ENCODE measurements at regions of chr22 and their contacts with region 1.

Region 1: DNA sequence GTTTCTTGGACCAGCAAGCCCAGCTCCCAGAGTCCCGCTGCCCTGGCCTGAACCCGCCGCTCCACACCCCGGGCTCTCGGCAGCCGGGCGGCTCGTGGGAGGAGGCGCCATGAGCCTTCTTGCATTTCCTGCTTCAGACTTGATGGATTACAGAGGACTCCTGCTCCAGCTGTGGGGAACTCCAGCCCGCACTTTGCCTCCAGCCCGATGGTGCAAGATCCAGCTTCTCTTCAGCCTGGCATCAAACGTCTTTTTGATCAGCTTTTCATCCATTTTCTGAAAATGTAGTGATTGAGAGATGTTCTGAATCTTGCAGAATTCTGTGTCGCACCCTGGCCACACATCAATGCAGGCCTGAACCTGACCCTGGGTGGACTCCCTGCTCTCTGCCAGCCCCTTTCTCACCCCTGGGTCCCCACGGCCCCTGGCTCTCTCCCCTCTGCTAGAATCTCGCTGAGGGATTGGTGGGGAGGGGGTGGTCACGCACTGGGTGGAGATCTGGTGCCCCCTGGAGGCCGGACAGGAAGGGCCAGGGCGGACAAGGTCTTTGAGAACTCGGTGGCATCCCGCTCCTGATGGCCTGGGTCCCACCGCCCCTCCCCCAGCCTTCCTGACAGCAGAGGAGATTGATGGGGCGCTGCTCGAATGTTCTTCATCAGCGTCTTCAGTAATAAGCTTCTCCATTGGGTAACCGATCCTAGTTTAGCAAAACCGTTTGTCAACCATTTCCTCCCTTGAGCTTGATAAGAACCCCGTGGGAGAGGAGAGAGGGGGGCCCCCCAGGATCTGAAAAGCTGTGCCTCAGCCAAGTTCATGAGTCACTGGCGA is 12.1 kb upstream of the NFAM1 start:
- DNase-seq: peak; percentile 83 to 90 (median 85)
- H3K4me3 ChIP-seq: peak overlapping the region; percentile 33 to 71
- H3K4me3 Mint-ChIP-seq: peak overlapping the region; percentile 76 to 87 (median 84)
- H3K27ac ChIP-seq: peak overlapping the region; percentile 69
- H3K27ac Mint-ChIP-seq: peak overlapping the region; percentile 93 to 96 (median 94)
- H3K4me1 ChIP-seq: peaks cover 20% of the 10 kb centered on the region
- H3K4me1 Mint-ChIP-seq: peaks cover 14 to 34% (median 21%) of the 10 kb centered on the region in 4 donors
- H3K27me3 ChIP-seq: no peaks in the 10 kb centered on the region
- H3K27me3 Mint-ChIP-seq: no peaks in the 10 kb centered on the region

Region 2: DNA sequence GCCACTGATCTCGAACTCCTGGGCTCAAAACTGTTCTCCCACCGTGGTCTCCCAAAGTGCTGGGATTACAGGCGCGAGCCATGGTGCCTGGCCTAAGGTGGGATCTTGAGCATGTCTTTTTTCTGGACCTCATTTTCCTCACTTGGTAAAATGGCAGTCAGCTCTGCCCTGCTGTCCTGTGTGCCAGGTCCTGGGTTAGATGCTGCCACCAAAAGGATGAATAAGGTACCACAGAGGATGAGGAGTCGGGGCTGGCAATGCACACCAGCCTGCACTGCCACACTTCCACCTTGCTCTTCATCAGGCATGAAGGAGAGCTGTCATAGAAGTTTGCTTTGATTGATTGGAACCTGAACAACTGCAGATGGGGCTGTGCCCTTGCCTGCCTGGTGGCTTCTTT is 943.1 kb before region 1 on chr22:
- CTCF ChIA-PET with region 1: no interaction called
- POLR2A ChIA-PET with region 1: no interaction called
- intact Hi-C with region 1: no loop called
- DNase-seq: peak in 1 of 5 donors; percentile 10
- H3K4me3 ChIP-seq: no peak overlapping the region
- H3K4me3 Mint-ChIP-seq: no peak overlapping the region
- H3K27ac ChIP-seq: no peak overlapping the region
- H3K27ac Mint-ChIP-seq: peak overlapping the region in 1 of 7 donors; percentile 37
- H3K4me1 ChIP-seq: no peaks in the 10 kb centered on the region
- H3K4me1 Mint-ChIP-seq: peaks cover 0 to 7% (median 0%) of the 10 kb centered on the region in 4 donors
- H3K27me3 ChIP-seq: no peaks in the 10 kb centered on the region
- H3K27me3 Mint-ChIP-seq: no peaks in the 10 kb centered on the region

Region 3: DNA sequence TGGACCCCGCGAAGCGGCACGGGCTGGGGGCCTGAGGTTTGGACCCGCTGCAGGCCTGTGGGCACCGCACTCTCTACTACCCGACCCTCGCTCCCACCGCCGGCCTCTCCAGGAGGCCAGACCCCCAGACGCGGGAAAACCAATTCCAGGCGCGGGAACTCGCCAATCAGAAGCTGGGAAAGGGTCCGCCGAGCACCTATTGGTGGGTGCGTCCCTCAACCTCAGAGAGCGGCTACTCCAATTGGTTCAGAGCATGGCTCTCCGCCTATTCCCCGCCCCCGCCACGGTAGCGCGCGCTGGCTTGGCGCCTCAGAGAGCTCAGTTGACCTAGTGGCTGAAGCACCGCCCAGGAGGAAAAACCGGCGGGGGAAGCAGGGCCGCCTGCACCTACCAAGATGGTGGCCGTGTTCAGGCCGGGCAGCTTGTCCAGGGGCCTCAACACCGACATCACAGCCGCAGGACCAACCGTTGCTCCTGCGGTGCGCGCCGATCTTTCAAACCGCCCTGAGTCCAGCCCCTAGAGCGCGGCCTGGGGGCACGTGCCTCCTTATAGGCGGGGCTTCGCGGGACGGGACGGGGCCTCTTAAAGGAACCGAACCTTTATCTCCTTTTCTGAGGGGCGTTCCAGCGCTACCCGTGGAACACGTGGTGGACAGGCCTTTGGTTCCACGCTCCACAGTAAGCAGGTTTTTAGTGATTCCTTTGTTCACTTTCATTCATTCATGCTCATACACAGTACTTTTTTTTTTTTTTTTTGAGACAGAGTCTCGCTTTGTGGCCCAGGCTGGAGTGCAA is 497.5 kb before region 1 on chr22 and contains the start of gene CENPM:
- CTCF ChIA-PET with region 1: interaction called, 3 read pairs
- POLR2A ChIA-PET with region 1: interaction called, 10 read pairs
- intact Hi-C with region 1: no loop called
- DNase-seq: peak; percentile 84 to 88 (median 86)
- H3K4me3 ChIP-seq: peak within 1 kb of the TSS; percentile 84 to 87
- H3K4me3 Mint-ChIP-seq: peak within 1 kb of the TSS; percentile 89 to 97 (median 92)
- H3K27ac ChIP-seq: peak within 1 kb of the TSS; percentile 53
- H3K27ac Mint-ChIP-seq: peak within 1 kb of the TSS; percentile 82 to 94 (median 89)
- H3K4me1 ChIP-seq: peaks cover 14% of the 10 kb centered on the region
- H3K4me1 Mint-ChIP-seq: peaks cover 4 to 29% (median 12%) of the 10 kb centered on the region in 4 donors
- H3K27me3 ChIP-seq: no peaks in the 10 kb centered on the region
- H3K27me3 Mint-ChIP-seq: no peaks in the 10 kb centered on the region
- total RNA-seq, gene CENPM: 7.6 to 12.0 TPM

Region 4: DNA sequence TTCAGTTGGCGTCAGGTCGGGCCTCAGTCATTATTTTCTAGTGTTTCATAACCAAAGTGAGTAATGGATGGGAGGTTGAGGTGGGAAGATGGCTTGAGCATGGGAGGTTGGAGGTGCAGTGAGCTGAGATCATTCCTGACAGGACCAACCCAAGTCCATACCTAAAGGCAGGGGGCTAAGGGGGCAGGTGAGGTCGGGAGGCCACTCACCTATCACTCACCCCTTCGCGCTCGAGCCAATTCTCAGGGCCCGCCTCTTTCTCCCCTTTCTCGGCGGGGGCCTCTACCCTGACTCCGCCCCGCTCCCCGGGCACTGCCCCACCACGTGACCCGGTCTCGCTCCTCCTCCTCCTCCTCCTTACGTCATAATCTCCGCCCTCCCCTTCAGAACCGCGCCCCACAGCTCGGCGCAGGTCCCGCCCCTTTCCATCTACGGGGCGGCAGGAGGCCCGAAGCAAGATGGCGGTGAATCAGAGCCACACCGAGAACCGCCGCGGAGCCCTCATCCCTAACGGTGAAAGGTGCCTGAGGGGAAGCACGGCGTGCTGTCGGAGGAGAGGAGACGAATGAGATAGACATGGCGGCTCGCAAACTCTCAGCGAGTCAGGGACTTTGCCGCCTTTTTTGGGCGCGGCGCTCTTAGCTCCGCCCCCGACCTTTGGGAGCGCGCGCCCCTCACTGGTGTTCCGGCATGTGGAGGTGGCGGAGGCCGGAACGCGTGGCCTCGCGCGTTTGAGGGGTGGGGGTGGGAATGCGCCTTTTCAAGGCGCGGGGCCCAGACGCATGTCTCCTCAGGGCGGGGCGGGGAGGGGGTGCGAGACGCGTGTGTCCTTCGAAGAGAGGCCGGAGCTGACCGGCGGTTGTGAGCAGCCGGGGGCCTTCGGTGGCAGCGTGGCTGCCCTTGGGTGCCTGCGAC is 445.7 kb before region 1 on chr22 and contains the start of gene WBP2NL:
- CTCF ChIA-PET with region 1: interaction called, 3 read pairs
- POLR2A ChIA-PET with region 1: interaction called, 11 read pairs
- intact Hi-C with region 1: no loop called
- DNase-seq: peak; percentile 90 to 92 (median 92)
- H3K4me3 ChIP-seq: peak within 1 kb of the TSS; percentile 6 to 74
- H3K4me3 Mint-ChIP-seq: peak within 1 kb of the TSS; percentile 93 to 99 (median 98)
- H3K27ac ChIP-seq: peak within 1 kb of the TSS; percentile 61
- H3K27ac Mint-ChIP-seq: peak within 1 kb of the TSS; percentile 67 to 100 (median 98)
- H3K4me1 ChIP-seq: peaks cover 21% of the 10 kb centered on the region
- H3K4me1 Mint-ChIP-seq: peaks cover 13 to 35% (median 19%) of the 10 kb centered on the region in 4 donors
- H3K27me3 ChIP-seq: no peaks in the 10 kb centered on the region
- H3K27me3 Mint-ChIP-seq: no peaks in the 10 kb centered on the region
- total RNA-seq, gene WBP2NL: 3.5 to 5.4 TPM

Region 5: DNA sequence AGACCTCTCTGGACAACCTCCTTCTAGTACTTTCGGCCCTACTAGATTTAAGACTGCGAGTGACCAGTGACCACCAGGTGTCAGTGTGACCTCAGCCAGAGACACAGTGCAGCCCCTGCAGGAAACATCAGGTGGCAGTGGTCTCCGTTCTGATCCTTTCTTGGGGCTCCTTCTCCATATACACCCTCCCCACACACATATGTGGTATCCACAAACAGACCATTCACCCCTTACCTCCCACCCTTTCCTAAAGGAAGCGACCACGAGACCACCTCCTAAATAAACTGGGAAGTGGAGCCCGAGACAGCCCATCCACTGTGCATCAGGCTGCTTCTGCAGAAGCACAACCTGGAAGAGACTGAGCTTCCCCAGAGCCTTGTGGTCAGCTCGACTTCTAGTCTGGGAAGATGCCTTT is 275.2 kb before region 1 on chr22:
- CTCF ChIA-PET with region 1: interaction called, 38 read pairs
- POLR2A ChIA-PET with region 1: no interaction called
- intact Hi-C with region 1: no loop called
- DNase-seq: peak; percentile 66 to 80 (median 77)
- H3K4me3 ChIP-seq: no peak overlapping the region
- H3K4me3 Mint-ChIP-seq: no peak overlapping the region
- H3K27ac ChIP-seq: no peak overlapping the region
- H3K27ac Mint-ChIP-seq: peak overlapping the region; percentile 35 to 92 (median 70)
- H3K4me1 ChIP-seq: peaks cover 18% of the 10 kb centered on the region
- H3K4me1 Mint-ChIP-seq: peaks cover 25 to 46% (median 32%) of the 10 kb centered on the region in 4 donors
- H3K27me3 ChIP-seq: no peaks in the 10 kb centered on the region
- H3K27me3 Mint-ChIP-seq: no peaks in the 10 kb centered on the region

Region 6: DNA sequence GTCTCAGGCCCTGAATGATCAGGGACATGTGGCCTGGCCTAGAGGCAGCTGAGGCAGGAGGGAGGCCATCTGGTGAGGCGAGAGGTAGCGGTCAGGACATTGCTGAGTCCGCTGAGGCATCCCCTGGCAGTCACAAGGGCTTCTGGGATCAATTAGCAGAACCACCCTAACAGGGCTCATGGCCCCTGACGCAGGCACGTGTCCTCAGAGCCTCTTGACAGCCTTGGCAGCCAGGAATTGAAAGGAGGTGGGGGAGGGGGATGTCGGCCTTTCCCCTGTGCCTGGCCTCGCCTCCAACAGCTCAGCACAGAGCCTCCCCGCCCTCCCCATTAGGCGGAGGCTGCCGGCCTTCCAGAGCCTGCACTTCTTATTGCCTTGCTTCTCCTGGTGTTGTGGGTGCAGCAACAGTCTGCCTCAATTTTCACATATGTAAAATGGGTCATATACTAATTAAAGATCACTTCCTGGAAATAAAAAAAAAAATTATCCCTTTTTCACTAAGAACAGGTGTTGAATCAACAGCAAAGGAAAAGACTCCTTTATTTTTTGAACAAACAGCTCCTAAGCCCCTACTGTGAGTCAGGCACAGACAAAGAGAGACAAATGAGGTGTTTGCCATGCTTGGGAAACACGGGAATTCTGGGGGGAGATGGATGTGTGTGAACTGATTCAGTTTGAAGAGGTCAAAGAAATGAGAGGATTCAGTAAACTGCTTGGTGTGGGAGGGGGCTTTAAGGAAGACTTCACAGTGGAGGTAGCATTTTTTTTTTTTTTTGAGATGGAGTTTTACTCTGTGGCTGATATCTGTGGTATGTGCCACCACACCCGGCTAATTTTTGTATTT is 67.4 kb before region 1 on chr22:
- CTCF ChIA-PET with region 1: no interaction called
- POLR2A ChIA-PET with region 1: no interaction called
- intact Hi-C with region 1: no loop called
- DNase-seq: no peak
- H3K4me3 ChIP-seq: no peak overlapping the region
- H3K4me3 Mint-ChIP-seq: no peak overlapping the region
- H3K27ac ChIP-seq: no peak overlapping the region
- H3K27ac Mint-ChIP-seq: no peak overlapping the region
- H3K4me1 ChIP-seq: no peaks in the 10 kb centered on the region
- H3K4me1 Mint-ChIP-seq: peaks cover 0 to 4% (median 2%) of the 10 kb centered on the region in 4 donors
- H3K27me3 ChIP-seq: no peaks in the 10 kb centered on the region
- H3K27me3 Mint-ChIP-seq: no peaks in the 10 kb centered on the region

Region 7: DNA sequence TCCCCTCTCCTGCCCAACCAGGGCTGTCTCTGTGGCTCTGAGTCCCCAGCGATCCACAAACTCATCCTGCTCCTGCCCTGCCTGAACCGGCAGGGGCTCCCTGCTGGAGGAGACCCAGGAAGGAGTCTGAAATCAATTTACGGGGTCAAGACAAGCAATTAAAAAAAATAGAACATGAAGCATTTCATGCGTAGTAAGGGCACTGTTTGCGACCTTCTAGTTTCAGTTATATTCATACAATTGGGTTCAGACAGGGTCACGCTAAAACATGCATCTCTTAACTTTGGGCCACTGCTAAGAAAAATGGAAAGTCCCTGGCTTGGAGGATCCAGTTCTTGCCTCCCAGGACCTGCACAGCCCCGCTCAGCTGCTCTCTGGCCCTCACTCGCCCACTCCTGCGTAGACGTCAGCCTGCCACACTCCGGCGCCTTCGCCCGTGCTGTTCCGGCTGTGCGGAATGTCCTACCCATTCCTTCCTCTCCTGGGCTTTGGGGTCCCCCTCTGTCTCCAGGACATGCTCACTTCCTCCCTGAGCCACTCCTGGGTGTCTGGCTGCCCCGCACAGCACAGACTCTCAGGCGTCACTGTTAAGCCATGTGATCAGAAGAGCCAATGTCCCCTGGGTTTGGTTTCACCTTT is 24.9 kb before region 1 on chr22:
- CTCF ChIA-PET with region 1: no interaction called
- POLR2A ChIA-PET with region 1: no interaction called
- intact Hi-C with region 1: no loop called
- DNase-seq: no peak
- H3K4me3 ChIP-seq: no peak overlapping the region
- H3K4me3 Mint-ChIP-seq: no peak overlapping the region
- H3K27ac ChIP-seq: no peak overlapping the region
- H3K27ac Mint-ChIP-seq: peak overlapping the region in 1 of 7 donors; percentile 53
- H3K4me1 ChIP-seq: no peaks in the 10 kb centered on the region
- H3K4me1 Mint-ChIP-seq: peaks cover 0 to 9% (median under 1%) of the 10 kb centered on the region in 4 donors
- H3K27me3 ChIP-seq: no peaks in the 10 kb centered on the region
- H3K27me3 Mint-ChIP-seq: peaks cover 5 to 7% of the 10 kb centered on the region in 2 donors

Region 8: DNA sequence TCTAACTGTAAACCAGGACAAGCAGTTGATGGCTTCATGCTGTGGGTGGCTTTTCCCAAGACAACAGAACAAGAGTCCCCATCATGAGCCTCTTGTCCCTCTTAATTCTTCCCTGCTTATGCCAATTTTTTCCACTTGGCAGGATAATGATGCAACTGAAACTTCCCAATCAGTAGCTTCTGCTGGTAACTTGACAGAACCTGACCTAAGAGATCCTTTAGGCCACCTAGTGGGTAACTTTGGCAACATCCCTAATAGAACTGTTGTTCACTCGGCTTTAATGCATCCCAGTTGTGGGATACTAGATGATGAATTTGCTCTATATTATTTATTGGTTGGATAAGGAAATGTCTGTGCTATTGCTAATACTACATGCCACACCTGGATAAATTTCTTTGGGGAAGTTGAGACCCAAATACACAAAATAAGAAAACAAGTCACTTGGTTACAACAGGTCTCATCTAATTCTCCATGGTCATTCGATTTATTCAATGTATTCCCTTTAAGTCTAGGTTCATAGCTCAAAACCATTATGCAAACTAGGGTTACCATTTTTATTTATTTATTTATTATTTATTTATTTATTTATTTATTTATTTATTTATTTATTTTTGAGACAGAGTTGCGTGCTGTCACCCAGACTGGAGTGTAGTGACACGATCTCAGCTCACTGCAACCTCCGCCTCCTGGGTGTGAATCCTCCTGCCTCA is 29.3 kb after region 1 on chr22:
- CTCF ChIA-PET with region 1: interaction called, 12 read pairs
- POLR2A ChIA-PET with region 1: no interaction called
- intact Hi-C with region 1: no loop called
- DNase-seq: peak in 4 of 5 donors; percentile 20 to 40 (median 27)
- H3K4me3 ChIP-seq: no peak overlapping the region
- H3K4me3 Mint-ChIP-seq: no peak overlapping the region
- H3K27ac ChIP-seq: no peak overlapping the region
- H3K27ac Mint-ChIP-seq: no peak overlapping the region
- H3K4me1 ChIP-seq: peaks cover 9% of the 10 kb centered on the region
- H3K4me1 Mint-ChIP-seq: peaks cover 5 to 7% (median 6%) of the 10 kb centered on the region in 4 donors
- H3K27me3 ChIP-seq: no peaks in the 10 kb centered on the region
- H3K27me3 Mint-ChIP-seq: peaks cover 0 to 4% of the 10 kb centered on the region in 2 donors